ENCODE measurements at regions of chr1 and their contacts with region 1.

Region 1: DNA sequence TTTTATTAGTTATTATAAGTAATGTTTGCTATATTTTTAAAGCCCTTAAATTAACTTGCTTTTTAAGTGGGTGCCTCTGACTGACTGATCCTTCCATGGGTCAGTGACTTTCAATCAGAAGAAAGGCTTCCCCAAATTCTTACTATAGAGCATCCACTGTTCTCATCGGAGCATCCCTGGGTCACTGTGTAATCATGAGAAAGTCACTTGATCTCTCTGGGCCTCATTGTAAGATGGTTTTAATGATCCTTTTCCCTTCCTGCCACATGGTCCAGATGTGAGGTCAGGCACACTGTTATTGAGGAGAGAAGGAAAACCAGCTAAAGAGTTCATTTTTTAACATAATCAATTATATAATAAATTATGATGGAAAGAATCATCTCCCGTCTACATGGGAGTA is 11.0 kb upstream of the NBL1 start:
- DNase-seq: no peak
- H3K4me3 ChIP-seq: no peak overlapping the region
- H3K4me3 Mint-ChIP-seq: no peak overlapping the region
- H3K27ac ChIP-seq: no peak overlapping the region
- H3K27ac Mint-ChIP-seq: peak overlapping the region in 1 of 8 donors; percentile 39
- H3K4me1 ChIP-seq: no peaks in the 10 kb centered on the region
- H3K4me1 Mint-ChIP-seq: no peaks in the 10 kb centered on the region
- H3K27me3 ChIP-seq: no peaks in the 10 kb centered on the region
- H3K27me3 Mint-ChIP-seq: no peaks in the 10 kb centered on the region

Region 2: DNA sequence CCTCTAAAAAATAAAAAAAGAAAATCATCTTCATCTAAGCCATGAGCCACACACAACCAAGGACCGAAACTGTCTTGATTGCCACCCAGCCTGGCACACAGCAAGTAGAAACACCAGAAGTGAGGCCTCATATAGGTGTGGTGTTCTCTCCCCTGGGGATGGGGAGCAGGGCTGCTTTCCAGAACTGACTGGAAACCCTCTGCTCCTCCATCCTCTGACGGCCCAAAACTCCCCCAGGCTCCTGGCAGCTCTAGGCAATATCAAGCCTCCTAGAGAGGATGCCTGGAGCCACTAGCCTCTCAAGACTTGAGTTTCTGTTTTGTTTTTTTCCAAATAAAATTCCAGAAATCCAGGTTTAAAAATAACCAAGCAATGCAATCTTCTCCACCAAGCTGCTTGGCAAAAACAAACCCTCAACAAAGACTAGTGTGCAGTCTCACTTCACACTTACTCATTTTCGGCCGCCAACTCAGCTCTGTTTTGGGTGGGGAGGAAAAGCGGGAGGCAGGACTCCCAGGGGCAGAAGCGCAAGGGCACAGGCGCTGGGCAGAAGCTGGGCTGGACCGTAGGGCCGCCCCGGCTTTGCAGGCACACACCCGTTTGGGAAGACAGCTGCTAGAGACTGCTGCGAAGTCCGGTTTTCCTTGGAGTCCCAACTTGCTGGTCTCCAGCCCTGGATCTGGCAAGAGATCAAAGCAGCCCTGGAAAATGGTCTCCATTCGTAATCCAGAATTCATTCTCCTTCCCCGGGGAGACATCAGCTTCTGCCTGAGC is 69.6 kb before region 1 on chr1:
- CTCF ChIA-PET with region 1: no interaction called
- POLR2A ChIA-PET with region 1: interaction called, 10 read pairs
- DNase-seq: no peak
- H3K4me3 ChIP-seq: no peak overlapping the region
- H3K4me3 Mint-ChIP-seq: no peak overlapping the region
- H3K27ac ChIP-seq: no peak overlapping the region
- H3K27ac Mint-ChIP-seq: no peak overlapping the region
- H3K4me1 ChIP-seq: no peaks in the 10 kb centered on the region
- H3K4me1 Mint-ChIP-seq: peaks cover 0 to 5% (median 4%) of the 10 kb centered on the region in 3 donors
- H3K27me3 ChIP-seq: no peaks in the 10 kb centered on the region
- H3K27me3 Mint-ChIP-seq: peaks cover 0 to 2% of the 10 kb centered on the region in 2 donors

Measured in CD8-positive, alpha-beta memory T cell (primary cell).